PC-9 (cell line): ENCODE measurements at regions of chr13 and their contacts with region 1.

Region 1: DNA sequence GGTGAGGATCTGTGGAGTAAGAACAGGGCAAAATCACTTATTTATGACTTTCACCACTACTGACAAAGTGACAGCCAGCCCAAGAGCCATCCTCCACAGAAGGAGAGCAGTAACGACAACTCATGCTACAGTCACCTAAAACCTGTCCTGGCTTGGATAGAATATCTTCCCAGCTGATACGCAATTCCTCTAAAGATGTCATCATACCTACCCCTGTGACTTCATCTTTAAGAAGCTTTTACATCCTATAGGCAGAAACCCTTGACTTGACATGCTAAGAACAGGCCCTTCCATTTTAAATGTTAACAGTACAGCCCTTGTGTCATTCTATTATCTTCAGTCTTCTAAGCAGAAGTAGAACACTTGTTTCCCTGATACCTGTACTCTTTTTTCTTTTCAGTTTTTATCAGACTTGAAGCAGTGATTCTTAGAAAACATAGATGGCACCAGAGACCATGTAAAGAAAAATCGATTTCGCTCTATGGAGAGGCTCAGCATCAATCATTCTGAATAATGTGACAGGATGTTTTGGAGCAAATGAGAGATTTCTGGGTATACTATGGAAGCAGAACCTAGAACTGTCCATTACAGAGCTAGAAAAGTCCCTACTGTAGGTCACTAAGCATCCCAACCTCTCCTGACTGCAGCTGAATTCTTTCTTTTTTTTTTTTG is 20.1 kb downstream of the STOML3 start:
- DNase-seq: no peak
- H3K4me3 ChIP-seq: no peak overlapping the region
- H3K27ac ChIP-seq: no peak overlapping the region
- H3K4me1 ChIP-seq: no peaks in the 10 kb centered on the region
- H3K27me3 ChIP-seq: no peaks in the 10 kb centered on the region
- CTCF ChIP-seq: peak; percentile 36

Region 2: DNA sequence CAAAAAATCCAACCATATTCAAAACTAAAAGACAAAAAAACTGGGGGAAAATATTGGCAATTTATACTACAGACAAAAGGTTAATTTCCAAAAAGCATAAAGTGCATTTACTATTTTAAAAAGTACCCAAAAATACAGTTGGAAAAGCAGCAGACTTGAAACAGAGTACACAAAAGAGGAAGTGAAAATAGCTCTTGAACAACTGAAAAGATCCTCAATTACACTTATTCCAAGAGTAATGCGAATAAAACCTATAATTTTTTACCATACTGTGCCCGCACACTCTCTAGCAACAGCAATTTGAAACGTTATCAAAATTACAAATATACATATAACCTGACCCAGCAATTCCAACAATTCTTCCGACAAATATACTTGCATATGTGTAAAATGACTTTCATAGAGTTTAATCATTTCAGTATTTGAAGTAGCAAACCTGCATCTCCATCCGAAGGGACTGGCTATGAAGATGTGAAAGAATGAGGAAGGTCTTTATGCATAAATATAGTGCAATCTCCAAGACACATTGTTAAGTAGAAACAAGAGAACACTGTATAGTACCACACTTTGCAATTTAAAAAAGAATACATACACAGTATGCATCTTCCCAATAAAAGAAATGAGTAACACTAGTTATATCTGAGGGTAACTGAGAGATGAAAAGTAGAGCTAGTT is 1996.8 kb before region 1 on chr13:
- CTCF ChIA-PET with region 1: no interaction called
- POLR2A ChIA-PET with region 1: interaction called, 26 read pairs
- intact Hi-C with region 1: no loop called
- DNase-seq: no peak
- H3K4me3 ChIP-seq: no peak overlapping the region
- H3K27ac ChIP-seq: no peak overlapping the region
- H3K4me1 ChIP-seq: no peaks in the 10 kb centered on the region
- H3K27me3 ChIP-seq: no peaks in the 10 kb centered on the region
- CTCF ChIP-seq: no peak

Region 3: GRCh38 chr13:38630780-38631179 is 339.7 kb before region 1 on chr13:
- CTCF ChIA-PET with region 1: no interaction called
- POLR2A ChIA-PET with region 1: no interaction called
- intact Hi-C with region 1: no loop called
- DNase-seq: no peak
- H3K4me3 ChIP-seq: no peak overlapping the region
- H3K27ac ChIP-seq: no peak overlapping the region
- H3K4me1 ChIP-seq: no peaks in the 10 kb centered on the region
- H3K27me3 ChIP-seq: no peaks in the 10 kb centered on the region
- CTCF ChIP-seq: no peak

Region 4: DNA sequence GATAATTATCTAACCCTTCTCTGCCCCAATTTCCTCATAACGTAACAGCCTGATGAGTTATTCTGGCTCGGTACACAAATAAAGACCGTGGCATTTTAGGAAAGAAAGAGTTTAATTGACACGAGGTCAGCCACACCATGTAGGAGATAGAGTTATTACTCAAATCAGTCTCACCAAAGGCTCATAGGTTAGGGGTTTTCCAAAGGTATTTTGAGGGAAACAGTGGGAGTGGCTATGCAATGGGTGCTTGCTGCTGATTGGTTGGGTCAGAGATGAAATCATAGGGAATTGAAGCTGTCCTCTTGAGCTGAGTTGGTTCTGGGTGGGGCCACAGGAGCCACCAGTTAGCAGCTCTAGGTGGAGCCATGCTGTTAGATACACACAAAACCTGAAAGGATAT is 146.2 kb before region 1 on chr13:
- CTCF ChIA-PET with region 1: interaction called, 11 read pairs
- POLR2A ChIA-PET with region 1: no interaction called
- intact Hi-C with region 1: no loop called
- DNase-seq: no peak
- H3K4me3 ChIP-seq: no peak overlapping the region
- H3K27ac ChIP-seq: no peak overlapping the region
- H3K4me1 ChIP-seq: no peaks in the 10 kb centered on the region
- H3K27me3 ChIP-seq: no peaks in the 10 kb centered on the region
- CTCF ChIP-seq: no peak

Region 5: DNA sequence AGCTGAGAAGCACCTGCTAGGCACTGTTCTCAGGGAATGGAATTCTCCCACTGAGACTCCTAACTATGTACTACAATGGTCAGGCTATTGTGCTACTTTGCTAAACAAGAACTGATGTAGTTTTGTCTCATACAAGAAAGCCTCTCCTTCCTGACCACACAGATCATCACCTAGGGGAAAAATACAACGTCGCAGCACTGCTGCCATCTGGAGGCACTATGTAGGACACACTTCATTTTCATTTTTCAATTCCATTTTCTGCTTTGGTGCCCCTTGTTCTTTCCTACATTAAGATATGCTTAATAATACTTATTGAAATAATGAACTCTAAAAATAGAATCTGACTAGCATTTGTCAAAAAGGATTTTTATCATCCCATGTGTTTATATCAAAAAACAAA is 46.3 kb after region 1 on chr13:
- CTCF ChIA-PET with region 1: no interaction called
- POLR2A ChIA-PET with region 1: no interaction called
- intact Hi-C with region 1: no loop called
- DNase-seq: no peak
- H3K4me3 ChIP-seq: no peak overlapping the region
- H3K27ac ChIP-seq: no peak overlapping the region
- H3K4me1 ChIP-seq: no peaks in the 10 kb centered on the region
- H3K27me3 ChIP-seq: no peaks in the 10 kb centered on the region
- CTCF ChIP-seq: peak; percentile 61

Region 6: GRCh38 chr13:39062004-39062403 is 91.5 kb after region 1 on chr13:
- CTCF ChIA-PET with region 1: no interaction called
- POLR2A ChIA-PET with region 1: no interaction called
- intact Hi-C with region 1: no loop called
- DNase-seq: no peak
- H3K4me3 ChIP-seq: no peak overlapping the region
- H3K27ac ChIP-seq: no peak overlapping the region
- H3K4me1 ChIP-seq: no peaks in the 10 kb centered on the region
- H3K27me3 ChIP-seq: no peaks in the 10 kb centered on the region
- CTCF ChIP-seq: no peak

Region 7: GRCh38 chr13:39245688-39246087 is 275.2 kb after region 1 on chr13:
- CTCF ChIA-PET with region 1: no interaction called
- POLR2A ChIA-PET with region 1: no interaction called
- intact Hi-C with region 1: no loop called
- DNase-seq: no peak
- H3K4me3 ChIP-seq: no peak overlapping the region
- H3K27ac ChIP-seq: no peak overlapping the region
- H3K4me1 ChIP-seq: no peaks in the 10 kb centered on the region
- H3K27me3 ChIP-seq: no peaks in the 10 kb centered on the region
- CTCF ChIP-seq: no peak